Gastrocnemius medialis (tissue), 4 donors: ENCODE measurements at regions of chr10 and their contacts with region 1.

Region 1: DNA sequence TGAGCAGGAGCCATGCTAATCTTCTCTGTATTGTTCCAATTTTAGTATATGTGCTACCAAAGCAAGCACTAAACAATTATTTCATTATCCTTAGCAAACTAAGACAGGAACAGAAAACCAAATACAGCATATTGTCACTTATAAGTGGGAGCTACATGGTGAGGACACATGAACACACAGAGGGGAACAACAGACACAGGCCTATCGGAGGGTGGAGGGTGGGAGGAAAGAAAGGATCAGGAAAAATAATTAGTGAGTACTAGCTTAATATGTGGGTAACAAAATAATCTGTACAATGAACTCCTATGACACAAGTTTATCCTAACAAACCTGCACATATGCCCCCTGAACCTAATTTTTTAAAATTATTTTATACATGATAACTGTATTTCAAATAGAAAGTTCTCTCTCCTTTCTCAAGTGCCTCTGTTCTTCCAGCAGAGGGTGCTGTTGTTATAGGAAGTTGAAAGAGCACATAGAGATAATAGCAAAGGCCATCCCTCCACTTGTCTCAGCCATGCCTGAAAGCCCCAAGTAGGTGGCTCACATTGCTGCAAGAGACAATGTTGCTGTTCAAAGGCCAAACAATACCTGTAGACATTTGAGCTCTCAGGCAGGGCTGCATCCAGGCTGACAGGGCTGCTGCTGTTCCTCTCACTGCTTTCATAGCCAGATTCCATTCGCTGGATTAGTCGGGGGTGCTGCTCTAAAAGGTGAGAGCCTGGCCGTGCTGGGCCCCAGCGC is 33.4 kb upstream of the PPP3CB start:
- DNase-seq: peak; percentile 15 to 65
- ATAC-seq: peak; percentile 67 to 91
- H3K4me3 ChIP-seq: no peak overlapping the region
- H3K27ac ChIP-seq: peak overlapping the region; percentile 51 to 78 (median 58)
- H3K4me1 ChIP-seq: peaks cover 18 to 25% of the 10 kb centered on the region in 2 donors
- H3K27me3 ChIP-seq: no peaks in the 10 kb centered on the region
- CTCF ChIP-seq: peak; percentile 77 to 89 (median 86)
- POLR2A ChIP-seq: no peak

Region 2: GRCh38 chr10:73401636-73402035 is 127.6 kb before region 1 on chr10:
- in situ Hi-C with region 1: no loop called
- intact Hi-C with region 1: no loop called
- DNase-seq: no peak
- ATAC-seq: no peak
- H3K4me3 ChIP-seq: no peak overlapping the region
- H3K27ac ChIP-seq: peak overlapping the region in 1 of 4 donors; percentile 39
- H3K4me1 ChIP-seq: peaks cover 42 to 67% of the 10 kb centered on the region in 2 donors
- H3K27me3 ChIP-seq: no peaks in the 10 kb centered on the region
- CTCF ChIP-seq: no peak
- POLR2A ChIP-seq: no peak

Region 3: GRCh38 chr10:73413528-73414229 is 115.6 kb before region 1 on chr10 and contains the start of gene ANXA7:
- in situ Hi-C with region 1: no loop called
- intact Hi-C with region 1: no loop called
- DNase-seq: peak; percentile 89 to 93
- ATAC-seq: peak; percentile 82
- H3K4me3 ChIP-seq: peak within 1 kb of the TSS; percentile 80 to 96 (median 93)
- H3K27ac ChIP-seq: peak within 1 kb of the TSS; percentile 92 to 99 (median 98)
- H3K4me1 ChIP-seq: peaks cover 47 to 52% of the 10 kb centered on the region in 2 donors
- H3K27me3 ChIP-seq: no peaks in the 10 kb centered on the region
- CTCF ChIP-seq: peak in 2 of 5 experiments; percentile 60 to 61
- POLR2A ChIP-seq: peak; percentile 82 to 87
- total RNA-seq, gene ANXA7: 169 to 203 (median 186) TPM

Region 4: GRCh38 chr10:73552819-73553715 is 23.8 kb after region 1 on chr10:
- in situ Hi-C with region 1: no loop called
- intact Hi-C with region 1: loop called (anchors 2 kb)
- DNase-seq: peak; percentile 73 to 87
- ATAC-seq: peak; percentile 94
- H3K4me3 ChIP-seq: peak overlapping the region; percentile 30 to 45 (median 40)
- H3K27ac ChIP-seq: peak overlapping the region; percentile 95 to 98 (median 97)
- H3K4me1 ChIP-seq: peaks cover 64 to 85% of the 10 kb centered on the region in 2 donors
- H3K27me3 ChIP-seq: no peaks in the 10 kb centered on the region
- CTCF ChIP-seq: no peak
- POLR2A ChIP-seq: peak; percentile 56 to 61

Region 5: DNA sequence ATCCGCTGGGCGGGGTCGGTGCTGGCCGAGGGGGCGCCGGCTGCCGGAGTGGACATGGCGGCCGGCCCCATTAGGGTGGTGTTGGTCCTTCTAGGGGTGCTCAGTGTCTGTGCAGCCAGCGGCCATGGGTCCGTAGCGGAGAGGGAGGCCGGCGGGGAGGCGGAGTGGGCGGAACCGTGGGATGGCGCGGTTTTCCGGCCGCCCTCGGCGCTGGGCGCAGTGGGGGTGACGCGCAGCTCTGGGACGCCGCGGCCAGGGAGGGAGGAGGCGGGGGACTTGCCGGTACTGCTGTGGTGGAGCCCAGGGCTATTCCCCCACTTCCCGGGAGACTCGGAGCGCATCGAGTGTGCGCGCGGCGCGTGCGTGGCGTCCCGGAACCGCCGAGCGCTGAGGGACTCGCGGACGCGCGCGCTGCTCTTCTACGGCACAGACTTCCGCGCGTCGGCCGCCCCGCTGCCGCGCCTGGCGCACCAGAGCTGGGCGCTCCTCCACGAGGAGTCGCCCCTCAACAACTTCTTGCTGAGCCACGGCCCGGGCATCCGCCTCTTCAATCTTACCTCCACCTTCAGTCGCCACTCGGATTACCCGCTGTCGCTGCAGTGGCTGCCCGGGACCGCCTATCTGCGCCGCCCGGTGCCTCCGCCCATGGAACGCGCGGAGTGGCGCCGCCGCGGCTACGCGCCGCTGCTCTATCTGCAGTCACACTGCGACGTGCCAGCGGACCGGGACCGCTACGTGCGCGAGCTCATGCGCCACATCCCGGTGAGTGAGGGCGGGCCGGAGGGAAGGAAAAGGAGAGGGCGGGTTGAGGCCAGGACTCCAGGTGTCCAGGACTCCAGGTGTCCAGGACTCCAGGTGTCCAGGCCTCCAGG is 243.3 kb after region 1 on chr10:
- in situ Hi-C with region 1: loop called in 1 of 4 experiments (anchors 25 kb)
- intact Hi-C with region 1: no loop called
- DNase-seq: peak; percentile 72 to 87
- ATAC-seq: peak; percentile 77 to 80
- H3K4me3 ChIP-seq: peak overlapping the region; percentile 81 to 98 (median 89)
- H3K27ac ChIP-seq: peak overlapping the region; percentile 94 to 99 (median 98)
- H3K4me1 ChIP-seq: peaks cover 29 to 33% of the 10 kb centered on the region in 2 donors
- H3K27me3 ChIP-seq: no peaks in the 10 kb centered on the region
- CTCF ChIP-seq: peak in 4 of 5 experiments; percentile 9 to 45 (median 21)
- POLR2A ChIP-seq: peak; percentile 83 to 91

Region 6: GRCh38 chr10:73785221-73785720 is 256.0 kb after region 1 on chr10 and contains the start of gene ZSWIM8:
- in situ Hi-C with region 1: no loop called
- intact Hi-C with region 1: no loop called
- DNase-seq: peak; percentile 89 to 91
- ATAC-seq: peak; percentile 93 to 94
- H3K4me3 ChIP-seq: peak within 1 kb of the TSS; percentile 73 to 93 (median 86)
- H3K27ac ChIP-seq: peak within 1 kb of the TSS; percentile 80 to 95 (median 90)
- H3K4me1 ChIP-seq: peaks cover 53 to 62% of the 10 kb centered on the region in 2 donors
- H3K27me3 ChIP-seq: no peaks in the 10 kb centered on the region
- CTCF ChIP-seq: peak in 1 of 5 experiments; percentile 25
- POLR2A ChIP-seq: peak; percentile 85 to 92
- total RNA-seq, gene ZSWIM8: 52.6 to 81.4 (median 78.9) TPM

Region 7: GRCh38 chr10:73838827-73839226 is 309.6 kb after region 1 on chr10:
- in situ Hi-C with region 1: no loop called
- intact Hi-C with region 1: no loop called
- DNase-seq: no peak
- ATAC-seq: no peak
- H3K4me3 ChIP-seq: no peak overlapping the region
- H3K27ac ChIP-seq: no peak overlapping the region
- H3K4me1 ChIP-seq: no peaks in the 10 kb centered on the region
- H3K27me3 ChIP-seq: no peaks in the 10 kb centered on the region
- CTCF ChIP-seq: no peak
- POLR2A ChIP-seq: no peak